ENCODE measurements at regions of chr7 and their contacts with region 1.

Region 1: DNA sequence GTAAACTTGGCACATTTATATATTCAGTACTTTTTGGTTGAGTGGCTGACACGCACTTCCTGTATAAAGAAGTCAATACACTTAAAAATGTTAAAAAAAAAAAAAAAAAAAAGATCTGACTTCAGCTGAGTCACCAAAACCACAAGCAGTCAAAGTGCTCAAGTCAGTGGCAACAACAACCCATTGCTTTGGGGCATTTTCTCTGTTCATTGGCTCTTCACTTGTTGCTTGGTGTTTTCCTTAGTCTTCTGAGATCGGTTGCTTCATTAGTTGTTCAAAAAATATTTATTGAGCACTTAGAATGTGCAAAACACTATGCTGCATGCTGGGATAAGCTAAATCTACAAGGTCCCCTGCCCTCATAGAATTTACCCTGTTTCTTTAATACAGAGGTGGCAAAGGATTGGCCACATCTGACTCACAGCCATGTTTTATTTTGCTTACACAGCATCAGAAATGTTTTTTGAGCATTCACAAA is 63.7 kb downstream of the ZNRF2 start:
- DNase-seq: peak; percentile 76
- ATAC-seq: peak; percentile 89
- H3K4me3 Mint-ChIP-seq: peak overlapping the region; percentile 66
- H3K27ac Mint-ChIP-seq: peak overlapping the region; percentile 92
- H3K4me1 Mint-ChIP-seq: peaks cover 63% of the 10 kb centered on the region
- H3K27me3 Mint-ChIP-seq: no peaks in the 10 kb centered on the region

Region 2: GRCh38 chr7:29806995-29807841 is 540.9 kb before region 1 on chr7:
- CTCF ChIA-PET with region 1: no interaction called
- DNase-seq: no peak
- ATAC-seq: peak; percentile 25
- H3K4me3 Mint-ChIP-seq: no peak overlapping the region
- H3K27ac Mint-ChIP-seq: no peak overlapping the region
- H3K4me1 Mint-ChIP-seq: peaks cover 7% of the 10 kb centered on the region
- H3K27me3 Mint-ChIP-seq: peaks cover 74% of the 10 kb centered on the region

Region 3: GRCh38 chr7:30116771-30117170 is 231.4 kb before region 1 on chr7:
- CTCF ChIA-PET with region 1: no interaction called
- DNase-seq: no peak
- ATAC-seq: no peak
- H3K4me3 Mint-ChIP-seq: no peak overlapping the region
- H3K27ac Mint-ChIP-seq: no peak overlapping the region
- H3K4me1 Mint-ChIP-seq: peaks cover 2% of the 10 kb centered on the region
- H3K27me3 Mint-ChIP-seq: no peaks in the 10 kb centered on the region

Region 4: DNA sequence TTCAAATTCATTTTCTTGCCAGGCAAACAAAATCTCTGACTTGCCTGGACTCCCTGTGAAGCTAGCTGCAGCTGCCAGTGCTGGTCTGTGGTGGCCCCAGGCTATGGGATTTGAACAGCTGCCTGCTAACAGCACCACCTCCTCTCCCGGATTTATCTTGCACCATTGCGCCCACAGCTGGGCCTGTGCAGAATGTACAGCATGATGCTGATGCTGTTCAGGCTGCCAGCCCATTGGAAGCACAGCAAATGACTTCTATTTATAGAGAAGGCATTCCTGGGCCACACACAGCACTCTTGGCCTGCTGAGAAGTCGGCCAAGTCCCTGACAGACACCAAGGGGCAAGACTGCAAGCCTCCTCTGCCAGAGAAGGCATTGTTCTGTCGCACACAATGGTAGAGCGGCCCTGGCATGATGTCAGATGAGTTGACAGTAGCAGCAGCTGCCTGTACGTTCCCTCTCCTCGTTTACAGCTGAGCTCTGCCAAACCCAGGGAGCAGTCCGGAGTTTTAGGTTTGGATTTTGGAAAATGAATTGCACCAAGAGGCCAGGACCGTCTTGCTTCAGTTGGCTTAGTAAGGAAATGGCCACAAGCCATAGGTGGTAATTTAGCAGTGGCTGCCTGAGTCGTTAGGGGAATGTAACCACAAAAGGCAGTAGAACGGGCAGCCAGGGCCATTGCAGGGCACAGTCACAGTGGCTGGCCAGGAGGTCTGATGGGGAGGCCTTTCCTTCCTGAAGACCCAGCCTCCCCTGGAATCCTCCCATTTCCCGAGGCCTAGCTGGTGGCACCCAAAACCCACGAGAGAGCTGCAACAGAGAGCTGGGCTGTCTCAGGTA is 174.8 kb before region 1 on chr7:
- CTCF ChIA-PET with region 1: no interaction called
- DNase-seq: no peak
- ATAC-seq: no peak
- H3K4me3 Mint-ChIP-seq: no peak overlapping the region
- H3K27ac Mint-ChIP-seq: no peak overlapping the region
- H3K4me1 Mint-ChIP-seq: no peaks in the 10 kb centered on the region
- H3K27me3 Mint-ChIP-seq: peaks cover 2% of the 10 kb centered on the region

Region 5: GRCh38 chr7:30276203-30276900 is 71.8 kb before region 1 on chr7:
- CTCF ChIA-PET with region 1: interaction called, 53 read pairs
- DNase-seq: peak; percentile 73
- ATAC-seq: peak; percentile 82
- H3K4me3 Mint-ChIP-seq: no peak overlapping the region
- H3K27ac Mint-ChIP-seq: no peak overlapping the region
- H3K4me1 Mint-ChIP-seq: peaks cover 12% of the 10 kb centered on the region
- H3K27me3 Mint-ChIP-seq: no peaks in the 10 kb centered on the region

Region 6: DNA sequence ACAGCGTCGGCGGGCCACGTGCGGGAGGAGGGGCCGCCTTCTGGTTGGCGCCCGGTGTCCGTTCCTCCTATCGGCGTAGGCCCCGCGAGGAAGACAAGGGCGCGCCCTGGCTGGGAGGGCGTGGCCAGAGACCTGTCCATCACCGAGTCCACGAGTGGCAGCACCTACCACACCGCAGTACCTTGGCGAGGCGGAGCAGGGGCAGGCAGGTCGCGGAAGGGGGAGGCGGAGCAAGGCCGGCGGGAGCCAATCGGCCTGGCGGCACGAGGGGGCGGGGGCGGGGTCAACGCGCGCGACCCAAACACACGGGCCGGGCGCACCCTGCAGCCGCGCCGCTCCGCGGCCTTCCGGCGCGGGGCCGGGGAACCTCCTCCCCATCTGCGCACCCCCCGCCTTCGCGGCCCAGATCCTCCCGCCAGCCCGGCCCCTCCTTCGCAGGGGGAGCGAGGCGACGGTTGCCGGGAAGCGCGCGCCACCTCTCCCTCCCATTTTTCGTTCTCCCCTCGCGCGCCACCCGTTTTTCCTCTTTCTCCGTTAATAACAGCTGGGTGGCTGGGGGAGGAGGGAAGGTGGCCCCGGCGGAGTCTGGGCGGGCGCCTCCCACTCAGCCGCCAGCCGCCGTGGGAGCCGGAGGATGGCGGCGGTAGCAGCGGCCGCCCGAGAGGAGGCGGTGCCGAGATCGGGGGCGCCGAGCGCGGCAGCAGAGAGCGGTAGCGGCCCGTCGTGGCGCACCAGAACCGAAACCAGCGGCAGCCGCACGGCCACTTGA is 63.6 kb before region 1 on chr7 and contains the start of gene ZNRF2:
- CTCF ChIA-PET with region 1: interaction called, 18 read pairs
- DNase-seq: peak; percentile 100
- ATAC-seq: peak; percentile 89
- H3K4me3 Mint-ChIP-seq: peak within 1 kb of the TSS; percentile 77
- H3K27ac Mint-ChIP-seq: peak within 1 kb of the TSS; percentile 88
- H3K4me1 Mint-ChIP-seq: peaks cover 41% of the 10 kb centered on the region
- H3K27me3 Mint-ChIP-seq: no peaks in the 10 kb centered on the region
- total RNA-seq, gene ZNRF2: 14.0 to 21.3 TPM

Region 7: DNA sequence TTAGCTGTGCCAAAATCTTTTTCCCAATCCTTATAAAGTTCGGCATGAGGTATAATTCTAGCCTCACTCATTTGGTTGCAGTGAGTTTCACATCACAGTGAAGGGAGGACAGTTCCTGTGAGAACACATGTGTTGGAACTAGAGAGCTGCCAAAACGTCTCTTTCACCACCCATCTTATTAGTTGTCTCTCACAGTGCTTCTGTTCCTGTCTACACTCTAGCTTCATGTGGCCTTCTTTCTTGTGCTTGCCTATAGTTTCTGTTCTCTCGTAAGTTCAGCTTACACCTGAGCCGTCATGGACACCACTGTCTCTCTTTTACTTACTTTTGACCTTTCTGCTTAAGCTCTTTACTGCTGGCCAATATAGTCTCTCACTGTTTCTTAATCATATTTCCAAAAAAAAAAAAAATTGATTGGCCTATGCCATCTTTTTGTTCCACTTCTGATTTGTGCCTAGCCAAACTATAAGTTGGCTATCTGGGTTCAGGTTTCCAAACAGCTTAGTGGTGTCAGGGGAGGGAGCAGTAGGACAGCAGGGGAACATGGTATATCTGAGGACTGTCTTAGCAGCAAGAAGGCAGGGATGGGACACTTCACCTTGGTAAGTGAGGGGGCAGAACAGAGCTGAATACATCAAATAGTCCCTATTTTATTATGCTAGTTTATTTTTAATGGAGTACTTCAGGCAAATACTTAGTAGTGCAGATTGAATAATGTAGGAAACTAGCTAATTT is 25.7 kb before region 1 on chr7:
- CTCF ChIA-PET with region 1: interaction called, 15 read pairs
- DNase-seq: peak; percentile 45
- ATAC-seq: peak; percentile 73
- H3K4me3 Mint-ChIP-seq: peak overlapping the region; percentile 73
- H3K27ac Mint-ChIP-seq: peak overlapping the region; percentile 99
- H3K4me1 Mint-ChIP-seq: peaks cover 62% of the 10 kb centered on the region
- H3K27me3 Mint-ChIP-seq: no peaks in the 10 kb centered on the region

Region 8: GRCh38 chr7:30330134-30331111 is 17.7 kb before region 1 on chr7:
- CTCF ChIA-PET with region 1: interaction called, 12 read pairs
- DNase-seq: peak; percentile 68
- ATAC-seq: peak; percentile 90
- H3K4me3 Mint-ChIP-seq: peak overlapping the region; percentile 64
- H3K27ac Mint-ChIP-seq: peak overlapping the region; percentile 78
- H3K4me1 Mint-ChIP-seq: peaks cover 58% of the 10 kb centered on the region
- H3K27me3 Mint-ChIP-seq: no peaks in the 10 kb centered on the region

Region 9: GRCh38 chr7:30363778-30364563 is 15.8 kb after region 1 on chr7:
- CTCF ChIA-PET with region 1: interaction called, 14 read pairs
- DNase-seq: no peak
- ATAC-seq: no peak
- H3K4me3 Mint-ChIP-seq: no peak overlapping the region
- H3K27ac Mint-ChIP-seq: no peak overlapping the region
- H3K4me1 Mint-ChIP-seq: peaks cover 6% of the 10 kb centered on the region
- H3K27me3 Mint-ChIP-seq: no peaks in the 10 kb centered on the region